PC-9 (cell line): ENCODE measurements at regions of chr16 and their contacts with region 1.

Region 1: GRCh38 chr16:30091474-30092372 is at the start of gene TBX6:
- DNase-seq: peak; percentile 83 to 98
- H3K4me3 ChIP-seq: peak within 1 kb of the TSS; percentile 61
- H3K27ac ChIP-seq: peak within 1 kb of the TSS; percentile 87
- H3K4me1 ChIP-seq: peaks cover 55% of the 10 kb centered on the region
- H3K27me3 ChIP-seq: no peaks in the 10 kb centered on the region
- CTCF ChIP-seq: peak; percentile 72
- total RNA-seq, gene TBX6: 8.3 and 9.6 TPM in 2 replicates

Region 2: DNA sequence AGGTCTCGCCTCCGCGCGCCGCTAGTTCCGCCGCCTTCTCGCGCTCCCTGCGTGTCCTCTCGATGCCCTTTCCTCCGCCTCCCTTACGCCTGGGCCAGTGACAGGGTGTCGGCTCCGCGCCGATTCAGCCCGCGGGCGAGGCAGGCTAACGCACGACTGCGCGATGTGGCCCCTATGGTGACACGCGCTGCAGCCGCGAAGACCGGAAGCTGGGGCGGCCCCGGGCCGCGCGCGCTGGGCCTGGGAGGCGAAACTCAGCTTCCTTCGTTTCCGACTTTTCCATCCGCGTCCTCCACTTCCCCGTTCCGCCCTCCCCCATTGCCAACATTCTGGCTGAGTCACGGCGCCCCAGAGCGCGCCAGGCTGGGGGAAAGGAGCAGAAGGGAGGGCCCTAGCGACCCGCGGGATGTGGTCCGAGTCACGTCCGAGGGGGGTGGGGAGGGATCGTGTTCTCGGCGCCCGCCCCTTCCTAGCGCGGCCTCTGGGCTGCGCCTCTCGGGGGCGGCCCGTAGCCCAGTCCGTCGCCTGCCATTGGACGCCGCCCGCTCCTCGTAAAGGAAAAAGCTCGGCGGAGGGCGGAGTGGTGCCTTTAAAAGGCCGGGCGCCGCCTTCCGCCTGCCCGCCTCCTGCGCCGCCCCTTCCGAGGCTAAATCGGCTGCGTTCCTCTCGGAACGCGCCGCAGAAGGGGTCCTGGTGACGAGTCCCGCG is 26.4 kb before region 1 on chr16 and contains the start of gene ALDOA:
- CTCF ChIA-PET with region 1: interaction called, 17 read pairs
- POLR2A ChIA-PET with region 1: interaction called, 7 read pairs
- intact Hi-C with region 1: loop called (anchors 2 kb)
- DNase-seq: peak; percentile 95 to 100
- H3K4me3 ChIP-seq: peak within 1 kb of the TSS; percentile 94
- H3K27ac ChIP-seq: peak within 1 kb of the TSS; percentile 92
- H3K4me1 ChIP-seq: peaks cover 50% of the 10 kb centered on the region
- H3K27me3 ChIP-seq: no peaks in the 10 kb centered on the region
- CTCF ChIP-seq: no peak
- total RNA-seq, gene ALDOA: 2,395 and 3,090 TPM in 2 replicates

Region 3: DNA sequence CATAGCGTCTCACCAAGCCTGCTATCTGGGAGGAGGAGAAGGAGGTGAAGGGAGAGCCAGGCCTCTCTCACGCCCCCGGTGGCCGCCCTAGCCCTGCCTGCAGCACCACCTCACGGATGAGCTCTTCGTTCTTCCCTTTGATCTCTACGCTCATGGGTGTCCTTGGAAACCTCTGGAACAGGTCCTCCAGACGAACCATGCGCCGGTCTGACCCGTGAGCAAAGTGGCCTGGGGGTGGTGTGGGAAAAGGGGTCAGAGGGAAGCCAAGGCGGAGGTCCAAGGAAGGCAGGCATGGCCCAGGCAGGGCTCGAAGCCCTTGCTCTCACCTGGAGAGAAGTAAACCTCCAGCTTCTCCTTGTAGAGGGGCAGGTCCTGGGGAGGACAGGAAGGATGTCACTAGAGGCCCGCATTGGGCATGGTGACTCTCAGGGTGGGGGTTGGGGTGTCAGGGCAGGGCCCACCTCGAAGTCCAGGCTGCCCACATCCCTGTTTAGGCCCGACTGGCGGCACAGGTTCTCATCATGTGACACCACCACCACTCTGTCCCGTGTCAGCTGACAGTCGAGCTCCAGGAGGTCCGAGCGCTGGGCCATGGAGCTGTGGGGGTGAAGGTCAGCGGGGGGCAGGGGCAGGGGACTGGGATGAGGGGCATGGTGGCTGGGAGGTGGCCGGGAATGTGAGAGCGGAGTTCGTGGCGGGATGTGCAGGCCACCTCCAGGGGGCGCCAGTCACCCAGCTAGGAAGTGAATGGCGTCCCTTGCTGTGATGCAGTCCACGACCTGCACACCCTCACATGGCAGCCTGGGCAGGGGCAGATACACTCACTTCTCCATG is 20.7 kb after region 1 on chr16:
- CTCF ChIA-PET with region 1: interaction called, 19 read pairs
- POLR2A ChIA-PET with region 1: interaction called, 9 read pairs
- intact Hi-C with region 1: loop called (anchors 1 kb)
- DNase-seq: peak; percentile 49 to 71
- H3K4me3 ChIP-seq: no peak overlapping the region
- H3K27ac ChIP-seq: no peak overlapping the region
- H3K4me1 ChIP-seq: peaks cover 55% of the 10 kb centered on the region
- H3K27me3 ChIP-seq: no peaks in the 10 kb centered on the region
- CTCF ChIP-seq: peak; percentile 67

Region 4: GRCh38 chr16:30342751-30343490 is 251.2 kb after region 1 on chr16:
- CTCF ChIA-PET with region 1: no interaction called
- POLR2A ChIA-PET with region 1: no interaction called
- intact Hi-C with region 1: no loop called
- DNase-seq: no peak
- H3K4me3 ChIP-seq: no peak overlapping the region
- H3K27ac ChIP-seq: no peak overlapping the region
- H3K4me1 ChIP-seq: no peaks in the 10 kb centered on the region
- H3K27me3 ChIP-seq: no peaks in the 10 kb centered on the region
- CTCF ChIP-seq: no peak

Region 5: DNA sequence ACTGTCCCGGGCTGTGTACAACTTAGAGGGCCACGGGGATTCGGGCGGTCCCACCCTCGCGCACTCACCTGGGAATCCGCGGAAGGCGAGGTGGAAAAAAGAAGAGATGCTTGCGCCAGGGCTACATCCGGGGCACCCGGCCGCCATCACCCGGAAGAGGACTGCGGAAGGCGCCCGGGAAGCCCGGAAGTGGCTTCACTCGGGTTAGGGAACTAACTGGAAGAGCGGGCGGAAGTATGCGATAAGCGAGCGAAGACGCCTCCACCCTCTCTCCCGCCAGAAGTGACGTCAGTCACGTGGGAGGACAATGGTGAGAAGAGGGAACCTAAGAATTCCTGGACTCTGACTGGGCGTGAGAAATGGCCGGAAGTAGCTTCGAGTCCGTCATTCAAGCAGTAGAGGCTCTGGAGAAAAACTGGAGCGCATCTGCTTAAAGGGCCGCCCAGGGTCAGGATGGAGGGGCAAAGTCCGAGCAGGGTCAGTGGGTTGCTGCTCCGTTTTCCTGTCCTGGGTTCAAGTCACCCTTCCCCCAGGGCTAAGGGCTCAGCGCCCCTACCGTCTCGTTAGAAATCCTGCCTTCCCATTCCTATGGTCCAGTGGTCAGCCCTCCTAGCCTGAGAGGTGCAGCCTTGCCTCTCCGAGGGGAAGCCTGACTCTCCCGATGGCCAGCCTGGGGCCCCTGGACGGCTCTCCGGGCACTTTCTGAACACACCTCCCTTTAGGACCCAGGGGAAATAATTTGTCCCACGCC is 263.6 kb after region 1 on chr16 and contains the start of gene CD2BP2:
- CTCF ChIA-PET with region 1: no interaction called
- POLR2A ChIA-PET with region 1: no interaction called
- intact Hi-C with region 1: loop called (anchors 5 kb)
- DNase-seq: peak; percentile 97 to 99
- H3K4me3 ChIP-seq: peak within 1 kb of the TSS; percentile 99
- H3K27ac ChIP-seq: peak within 1 kb of the TSS; percentile 82
- H3K4me1 ChIP-seq: peaks cover 19% of the 10 kb centered on the region
- H3K27me3 ChIP-seq: no peaks in the 10 kb centered on the region
- CTCF ChIP-seq: no peak
- total RNA-seq, gene CD2BP2: 84.6 TPM in 2 replicates

Region 6: DNA sequence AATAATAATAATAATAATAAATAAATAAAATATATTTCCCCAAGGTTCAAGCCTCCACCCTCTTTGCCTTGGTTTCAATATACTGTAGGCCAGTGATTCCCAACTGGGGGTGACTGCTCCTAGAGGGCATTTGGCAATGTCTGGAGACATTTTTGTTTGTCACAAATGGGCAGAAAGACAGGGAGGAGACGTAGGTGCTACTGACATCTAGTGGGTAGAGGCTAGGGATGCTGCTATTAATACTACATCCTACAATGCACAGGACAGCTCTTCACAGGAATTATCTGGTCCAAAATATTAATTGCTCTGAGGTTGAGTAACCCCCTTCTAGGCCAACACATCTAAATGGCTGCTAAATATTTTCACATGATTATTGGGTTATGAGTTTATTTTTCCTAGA is 546.2 kb after region 1 on chr16:
- CTCF ChIA-PET with region 1: no interaction called
- POLR2A ChIA-PET with region 1: interaction called, 16 read pairs
- intact Hi-C with region 1: no loop called
- DNase-seq: peak; percentile 31 to 67
- H3K4me3 ChIP-seq: no peak overlapping the region
- H3K27ac ChIP-seq: no peak overlapping the region
- H3K4me1 ChIP-seq: peaks cover 13% of the 10 kb centered on the region; the same call in 1 of the 2 replicates
- H3K27me3 ChIP-seq: no peaks in the 10 kb centered on the region
- CTCF ChIP-seq: peak; percentile 73